Heart left ventricle (tissue), 16 donors: ENCODE measurements at regions of chr6 and their contacts with region 1.

Region 1: DNA sequence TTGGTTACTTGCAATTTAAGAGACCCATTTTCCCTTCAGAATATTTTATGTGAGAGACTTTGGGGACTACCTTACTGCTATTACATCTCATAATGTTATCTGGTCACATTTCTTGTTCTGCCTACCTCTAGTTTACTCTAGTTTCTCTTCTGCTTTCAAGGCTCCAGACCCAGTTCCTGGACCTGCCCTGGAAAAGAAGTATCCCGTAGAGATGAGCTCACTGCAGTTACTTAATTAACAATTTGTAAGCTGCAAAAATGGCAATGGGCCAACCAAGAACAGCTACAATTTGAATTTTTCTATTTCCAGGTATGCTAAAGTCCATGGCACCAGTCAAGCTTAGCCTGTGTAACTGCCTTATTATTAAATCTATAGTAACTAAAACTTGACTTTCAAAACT is 25.0 kb downstream of the TAB2 start:
- DNase-seq: no peak
- ATAC-seq: peak in 1 of 4 donors; percentile 11
- H3K4me3 ChIP-seq: no peak overlapping the region
- H3K27ac ChIP-seq: no peak overlapping the region
- H3K4me1 ChIP-seq: peaks cover 0 to 63% (median 36%) of the 10 kb centered on the region in 12 donors
- H3K27me3 ChIP-seq: no peaks in the 10 kb centered on the region
- CTCF ChIP-seq: no peak
- POLR2A ChIP-seq: no peak

Region 2: GRCh38 chr6:149271348-149272340 is 70.9 kb before region 1 on chr6:
- intact Hi-C with region 1: no loop called
- DNase-seq: no peak
- ATAC-seq: peak in 2 of 4 donors; percentile 48 to 59
- H3K4me3 ChIP-seq: no peak overlapping the region
- H3K27ac ChIP-seq: peak overlapping the region in 1 of 12 donors; percentile 46
- H3K4me1 ChIP-seq: peaks cover 0 to 52% (median 0%) of the 10 kb centered on the region in 12 donors
- H3K27me3 ChIP-seq: peaks cover 0 to 6% (median 0%) of the 10 kb centered on the region in 9 donors
- CTCF ChIP-seq: no peak
- POLR2A ChIP-seq: no peak

Region 3: DNA sequence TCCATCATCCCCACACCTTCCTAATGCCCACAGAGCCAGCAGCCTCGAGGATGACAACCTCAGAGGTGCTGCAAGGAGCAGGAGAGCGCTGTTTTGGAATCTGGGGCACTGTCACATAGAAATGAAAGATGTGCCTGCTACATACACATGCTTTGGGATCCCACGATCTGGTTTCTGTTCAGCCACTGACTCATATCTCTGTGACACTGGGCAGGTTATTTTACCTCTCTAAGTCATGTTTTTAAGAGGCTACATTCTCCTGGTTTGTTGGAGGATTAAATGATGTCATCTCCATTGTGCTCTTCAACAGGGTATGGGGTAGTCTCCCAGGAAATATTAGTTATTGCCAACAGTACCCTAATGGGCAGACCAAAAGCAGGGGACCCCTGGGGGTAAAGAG is 57.6 kb before region 1 on chr6:
- intact Hi-C with region 1: no loop called
- DNase-seq: no peak
- ATAC-seq: no peak
- H3K4me3 ChIP-seq: no peak overlapping the region
- H3K27ac ChIP-seq: no peak overlapping the region
- H3K4me1 ChIP-seq: no peaks in the 10 kb centered on the region
- H3K27me3 ChIP-seq: peaks cover 0 to 6% (median 0%) of the 10 kb centered on the region in 9 donors
- CTCF ChIP-seq: no peak
- POLR2A ChIP-seq: no peak

Region 4: DNA sequence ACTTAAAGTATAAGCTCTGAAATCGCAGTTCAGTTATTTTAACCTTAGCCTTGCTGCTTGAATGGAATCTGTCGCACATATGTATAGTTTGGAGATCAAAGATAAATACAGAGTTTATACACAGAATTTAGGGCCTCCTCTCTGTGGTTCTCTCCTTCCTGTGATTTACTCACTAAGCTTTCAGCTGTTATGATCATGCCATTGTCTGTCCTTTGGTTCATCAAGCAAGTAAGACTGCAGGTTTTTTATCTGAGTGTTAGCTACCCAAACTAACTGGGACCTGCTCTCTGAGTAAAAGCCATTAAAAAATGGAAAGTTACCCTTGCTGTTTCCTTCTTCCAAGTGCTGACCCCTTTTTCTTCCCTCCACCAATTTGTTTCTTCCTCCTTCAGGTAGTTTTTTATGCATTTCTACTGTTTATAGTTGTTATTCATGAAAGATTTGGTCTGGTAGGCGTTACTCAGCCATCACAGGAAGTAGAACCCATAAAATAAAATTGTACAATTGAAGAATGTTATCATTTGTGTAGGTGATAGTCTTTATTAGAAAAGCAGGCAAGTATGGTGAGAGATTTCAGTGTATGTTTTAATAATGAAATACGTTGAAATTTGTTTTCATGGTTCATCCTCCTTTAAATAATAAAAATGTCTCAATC is 23.9 kb after region 1 on chr6:
- intact Hi-C with region 1: loop called in 1 of 10 experiments (anchors 2 kb)
- DNase-seq: no peak
- ATAC-seq: no peak
- H3K4me3 ChIP-seq: no peak overlapping the region
- H3K27ac ChIP-seq: no peak overlapping the region
- H3K4me1 ChIP-seq: peaks cover 0 to 49% (median 21%) of the 10 kb centered on the region in 12 donors
- H3K27me3 ChIP-seq: no peaks in the 10 kb centered on the region
- CTCF ChIP-seq: no peak
- POLR2A ChIP-seq: no peak